Adrenal gland (tissue), 19 donors: ENCODE measurements at regions of chr7 and their contacts with region 1.

Region 1: DNA sequence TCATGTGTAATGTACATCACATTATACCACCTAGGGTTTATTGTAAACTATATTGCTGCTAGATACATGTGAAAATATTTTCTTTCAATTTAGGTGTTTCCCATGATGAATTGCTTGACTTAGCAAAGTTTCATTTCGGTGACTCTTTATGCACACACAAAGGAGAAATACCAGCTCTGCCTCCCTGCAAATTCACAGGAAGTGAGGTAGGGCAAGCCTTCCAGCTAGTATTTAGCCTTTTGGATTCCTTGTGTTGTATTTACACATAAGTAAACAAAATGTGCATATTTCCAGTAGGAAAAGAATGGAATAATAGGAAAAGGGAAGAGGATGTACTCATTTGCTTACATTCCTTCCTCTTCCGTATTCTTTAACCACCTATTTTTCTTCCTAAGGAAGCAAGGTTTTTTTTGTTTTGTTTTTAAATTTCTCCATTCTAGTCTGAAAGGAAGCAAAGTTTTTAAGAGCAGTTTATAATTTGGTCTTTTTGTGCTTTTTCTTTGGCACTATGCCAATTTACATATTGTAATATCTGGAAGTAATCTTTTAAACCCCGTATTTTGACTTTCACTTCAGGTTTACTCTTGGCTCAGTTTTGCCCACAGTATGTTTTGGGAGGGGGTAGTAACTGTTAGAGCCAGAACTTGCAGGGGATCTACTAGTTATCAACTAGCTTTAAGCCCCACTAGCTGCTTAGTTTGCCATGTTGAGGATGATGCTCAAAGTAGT is 10.4 kb downstream of the PMPCB start:
- DNase-seq: no peak
- H3K4me3 ChIP-seq: no peak overlapping the region
- H3K27ac ChIP-seq: no peak overlapping the region
- H3K4me1 ChIP-seq: no peaks in the 10 kb centered on the region
- H3K27me3 ChIP-seq: no peaks in the 10 kb centered on the region
- CTCF ChIP-seq: no peak
- POLR2A ChIP-seq: no peak

Region 2: DNA sequence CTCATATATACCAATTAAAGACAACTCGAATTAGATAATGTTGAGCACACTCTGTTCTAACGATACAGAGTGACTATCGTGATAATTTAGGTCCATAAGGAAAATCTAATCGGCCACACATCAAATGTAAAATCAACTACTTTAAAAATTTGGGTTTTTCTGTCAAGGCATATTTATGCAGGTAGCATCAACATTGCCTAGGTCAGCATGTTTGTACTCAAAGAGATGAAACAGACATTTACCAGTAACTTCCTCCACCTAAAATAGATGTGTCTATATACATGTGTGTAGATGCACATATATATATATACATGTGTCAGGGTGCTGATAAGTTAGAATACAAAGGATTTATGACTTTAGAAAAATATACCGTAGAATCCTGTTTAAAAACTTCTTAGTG is 61.8 kb after region 1 on chr7:
- intact Hi-C with region 1: loop called in 1 of 2 experiments (anchors 5 kb)
- DNase-seq: no peak
- H3K4me3 ChIP-seq: no peak overlapping the region
- H3K27ac ChIP-seq: no peak overlapping the region
- H3K4me1 ChIP-seq: no peaks in the 10 kb centered on the region
- H3K27me3 ChIP-seq: no peaks in the 10 kb centered on the region
- CTCF ChIP-seq: no peak
- POLR2A ChIP-seq: no peak